WTC11 (cell line): ENCODE measurements at regions of chr10 and their contacts with region 1.

Region 1: GRCh38 chr10:128211953-128212727 is 85.9 kb upstream of the MKI67 start:
- DNase-seq: peak; percentile 91
- ATAC-seq: peak; percentile 83
- H3K4me3 Mint-ChIP-seq: peak overlapping the region; percentile 63
- H3K27ac Mint-ChIP-seq: no peak overlapping the region
- H3K4me1 Mint-ChIP-seq: peaks cover 39% of the 10 kb centered on the region
- H3K27me3 Mint-ChIP-seq: peaks cover 13% of the 10 kb centered on the region
- CTCF ChIP-seq: peak; percentile 84

Region 2: GRCh38 chr10:128125944-128126764 is 86.0 kb before region 1 on chr10 and contains the start of gene MKI67:
- CTCF ChIA-PET with region 1: interaction called, 13 read pairs
- POLR2A ChIA-PET with region 1: no interaction called
- DNase-seq: peak; percentile 86
- ATAC-seq: peak; percentile 83
- H3K4me3 Mint-ChIP-seq: peak within 1 kb of the TSS; percentile 92
- H3K27ac Mint-ChIP-seq: peak within 1 kb of the TSS; percentile 68; the same call in 1 of the 2 replicates
- H3K4me1 Mint-ChIP-seq: peaks cover 35% of the 10 kb centered on the region
- H3K27me3 Mint-ChIP-seq: no peaks in the 10 kb centered on the region
- CTCF ChIP-seq: no peak
- total RNA-seq, gene MKI67: 93.6 to 118 TPM (median 96.5 TPM) in 3 replicates

Region 3: GRCh38 chr10:128150045-128150493 is 62.1 kb before region 1 on chr10:
- CTCF ChIA-PET with region 1: interaction called, 10 read pairs
- POLR2A ChIA-PET with region 1: no interaction called
- DNase-seq: peak; percentile 83
- ATAC-seq: peak; percentile 78
- H3K4me3 Mint-ChIP-seq: peak overlapping the region; percentile 64
- H3K27ac Mint-ChIP-seq: no peak overlapping the region
- H3K4me1 Mint-ChIP-seq: peaks cover 13% of the 10 kb centered on the region
- H3K27me3 Mint-ChIP-seq: peaks cover 13% of the 10 kb centered on the region
- CTCF ChIP-seq: peak; percentile 88

Region 4: GRCh38 chr10:128186959-128187787 is 25.0 kb before region 1 on chr10:
- CTCF ChIA-PET with region 1: interaction called, 18 read pairs
- POLR2A ChIA-PET with region 1: no interaction called
- DNase-seq: no peak
- ATAC-seq: no peak
- H3K4me3 Mint-ChIP-seq: no peak overlapping the region
- H3K27ac Mint-ChIP-seq: no peak overlapping the region
- H3K4me1 Mint-ChIP-seq: peaks cover 36% of the 10 kb centered on the region
- H3K27me3 Mint-ChIP-seq: peaks cover 3% of the 10 kb centered on the region
- CTCF ChIP-seq: no peak